GM12878 (cell line): ENCODE measurements at regions of chr3 and their contacts with region 1.

Region 1: GRCh38 chr3:195147649-195148095 is 123.3 kb downstream of the XXYLT1 start:
- DNase-seq: peak; percentile 91
- ATAC-seq: peak; percentile 83
- H3K4me3 ChIP-seq: peak overlapping the region; percentile 93
- H3K27ac ChIP-seq: peak overlapping the region; percentile 91
- H3K4me1 ChIP-seq: peaks cover 46% of the 10 kb centered on the region
- H3K27me3 ChIP-seq: no peaks in the 10 kb centered on the region
- CTCF ChIP-seq: no peak
- EP300 ChIP-seq: no peak
- POLR2A ChIP-seq: peak; percentile 79
- RAD21 ChIP-seq: no peak

Region 2: DNA sequence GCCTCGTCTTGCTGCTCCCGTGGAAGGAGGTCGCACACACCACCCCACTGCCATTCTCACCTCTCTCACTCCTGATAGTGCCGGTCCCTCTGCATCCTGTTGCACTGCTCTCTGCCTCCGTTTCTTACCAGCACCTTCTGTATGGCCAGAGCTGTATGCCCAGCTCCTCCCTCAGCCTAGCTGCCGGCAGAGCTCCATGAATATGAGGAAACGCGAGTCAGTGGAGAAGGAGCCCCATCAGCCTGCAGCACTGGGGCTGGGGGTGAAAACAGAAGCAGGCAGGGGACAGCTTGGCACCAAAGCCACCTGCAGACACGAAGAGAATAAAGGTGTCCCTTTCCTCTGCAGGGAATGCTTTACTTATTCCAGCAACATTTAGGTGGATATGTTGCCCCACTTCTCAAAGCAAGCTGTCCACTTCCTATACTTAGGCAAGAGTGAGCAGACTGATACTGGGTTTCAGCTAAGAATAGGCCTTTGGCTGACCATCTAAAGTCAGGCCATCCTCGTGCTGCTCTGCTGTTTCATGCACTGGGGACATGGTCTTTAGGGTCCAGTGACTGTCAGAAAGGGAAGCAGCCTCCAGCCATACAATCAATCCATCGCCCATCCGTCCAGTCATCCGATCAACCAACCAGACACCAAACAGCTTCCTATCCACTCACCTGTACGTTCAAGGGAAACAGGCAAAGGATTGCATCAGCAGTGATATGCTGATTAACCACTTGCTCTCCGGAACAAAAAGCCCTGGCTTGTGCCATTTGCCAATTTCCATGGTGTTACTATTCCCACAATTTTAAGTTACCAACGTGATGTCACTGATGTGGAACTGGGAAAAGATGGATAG is 99.4 kb before region 1 on chr3:
- CTCF ChIA-PET with region 1: no interaction called
- POLR2A ChIA-PET with region 1: no interaction called
- RAD21 ChIA-PET with region 1: no interaction called
- SMC1A ChIA-PET with region 1: no interaction called
- in situ Hi-C with region 1: no loop called
- intact Hi-C with region 1: no loop called
- DNase-seq: no peak
- ATAC-seq: no peak
- H3K4me3 ChIP-seq: no peak overlapping the region
- H3K27ac ChIP-seq: no peak overlapping the region
- H3K4me1 ChIP-seq: no peaks in the 10 kb centered on the region
- H3K27me3 ChIP-seq: no peaks in the 10 kb centered on the region; a peak in 1 of 4 replicates
- CTCF ChIP-seq: no peak
- EP300 ChIP-seq: no peak
- POLR2A ChIP-seq: no peak
- RAD21 ChIP-seq: no peak

Region 3: DNA sequence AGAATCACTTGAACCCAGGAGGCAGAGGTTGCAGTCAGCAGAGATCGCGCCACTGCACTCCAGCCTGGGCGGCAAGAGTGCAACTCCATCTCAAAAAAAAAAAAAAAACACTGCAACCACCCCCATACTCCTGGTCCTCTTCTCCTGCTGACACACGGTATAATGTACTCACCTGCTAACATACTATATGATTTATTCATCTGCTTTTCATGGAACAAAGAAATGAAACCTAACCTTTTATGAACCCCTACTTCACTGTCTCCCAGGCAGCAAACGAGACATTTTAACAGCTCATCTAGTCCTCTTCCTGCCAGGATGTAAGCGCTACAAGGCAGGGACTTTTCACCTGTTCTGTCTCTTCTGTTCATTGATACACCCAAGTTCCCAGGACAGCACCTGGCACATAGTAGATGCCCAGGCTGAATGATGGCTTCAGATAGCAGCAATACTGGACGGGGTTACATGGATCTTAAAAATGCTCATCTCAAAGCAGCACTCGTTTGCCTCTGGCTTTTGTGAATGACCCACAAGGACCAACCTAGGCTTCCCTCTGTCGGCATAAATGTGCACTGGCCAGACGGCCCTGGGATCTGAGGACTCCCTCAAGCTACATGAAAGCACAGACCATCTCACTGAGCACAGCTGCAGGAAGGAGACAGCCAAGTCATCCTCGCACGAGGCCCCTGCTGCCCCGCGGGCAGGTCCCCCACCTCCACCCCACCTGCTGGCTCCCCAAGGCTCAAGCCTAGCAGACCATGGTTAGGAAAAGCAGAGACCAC is 103.0 kb after region 1 on chr3:
- CTCF ChIA-PET with region 1: interaction called, 3 read pairs
- POLR2A ChIA-PET with region 1: interaction called, 13 read pairs
- RAD21 ChIA-PET with region 1: interaction called, 15 read pairs
- SMC1A ChIA-PET with region 1: interaction called, 28 read pairs
- in situ Hi-C with region 1: loop called (anchors 5 kb)
- intact Hi-C with region 1: no loop called
- DNase-seq: no peak
- ATAC-seq: peak; percentile 76
- H3K4me3 ChIP-seq: no peak overlapping the region
- H3K27ac ChIP-seq: peak overlapping the region; percentile 23
- H3K4me1 ChIP-seq: peaks cover 25% of the 10 kb centered on the region
- H3K27me3 ChIP-seq: no peaks in the 10 kb centered on the region
- CTCF ChIP-seq: peak; percentile 39 to 60 (median 42); a peak in 5 of 6 replicates
- EP300 ChIP-seq: no peak
- POLR2A ChIP-seq: no peak
- RAD21 ChIP-seq: peak; percentile 55